ENCODE measurements at regions of chr4 and their contacts with region 1.

Region 1: DNA sequence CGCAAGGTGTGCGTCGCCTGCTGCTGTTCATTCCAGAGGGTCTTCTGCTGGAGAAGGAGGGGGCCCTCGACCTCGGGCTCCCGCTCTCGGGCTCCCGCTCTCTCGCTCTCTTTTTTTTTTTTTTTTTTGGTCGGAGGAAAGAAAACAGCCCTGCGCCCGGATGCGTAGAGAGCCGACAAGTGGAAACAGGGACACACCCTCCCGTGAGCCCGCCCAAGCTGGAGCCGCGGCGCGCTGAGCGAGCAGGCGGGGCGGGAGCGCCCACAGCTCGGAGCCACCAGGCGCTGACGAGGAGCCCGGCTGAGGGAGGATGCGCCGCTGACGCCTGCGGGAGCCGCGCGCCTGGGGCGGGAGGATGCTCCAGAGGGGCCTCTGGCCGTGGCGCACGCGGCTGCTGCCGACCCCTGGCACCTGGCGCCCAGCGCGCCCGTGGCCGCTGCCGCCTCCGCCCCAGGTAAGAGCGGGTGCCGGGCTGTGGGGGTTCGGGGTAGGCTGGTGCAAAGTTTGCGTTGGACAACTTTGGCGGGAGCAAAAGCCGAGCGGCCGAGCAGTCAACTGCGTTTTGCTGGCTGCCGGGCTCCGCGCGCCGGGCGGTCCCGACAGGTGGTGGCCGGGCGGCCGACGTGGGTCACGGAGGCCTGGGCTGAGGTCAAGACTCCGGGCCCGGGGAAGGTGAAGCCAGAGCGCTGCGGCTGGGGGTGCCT is at the start of gene MCUB:
- DNase-seq: peak; percentile 95
- H3K4me3 Mint-ChIP-seq: peak within 1 kb of the TSS; percentile 92
- H3K27ac Mint-ChIP-seq: peak within 1 kb of the TSS; percentile 94
- H3K4me1 Mint-ChIP-seq: peaks cover 49% of the 10 kb centered on the region
- H3K27me3 Mint-ChIP-seq: no peaks in the 10 kb centered on the region
- total RNA-seq, gene MCUB: 90.6 to 96.9 TPM

Region 2: GRCh38 chr4:109548655-109549054 is 11.5 kb before region 1 on chr4:
- CTCF ChIA-PET with region 1: interaction called, 4 read pairs
- POLR2A ChIA-PET with region 1: interaction called, 16 read pairs
- DNase-seq: no peak
- H3K4me3 Mint-ChIP-seq: no peak overlapping the region
- H3K27ac Mint-ChIP-seq: no peak overlapping the region
- H3K4me1 Mint-ChIP-seq: peaks cover 16% of the 10 kb centered on the region
- H3K27me3 Mint-ChIP-seq: no peaks in the 10 kb centered on the region

Region 3: DNA sequence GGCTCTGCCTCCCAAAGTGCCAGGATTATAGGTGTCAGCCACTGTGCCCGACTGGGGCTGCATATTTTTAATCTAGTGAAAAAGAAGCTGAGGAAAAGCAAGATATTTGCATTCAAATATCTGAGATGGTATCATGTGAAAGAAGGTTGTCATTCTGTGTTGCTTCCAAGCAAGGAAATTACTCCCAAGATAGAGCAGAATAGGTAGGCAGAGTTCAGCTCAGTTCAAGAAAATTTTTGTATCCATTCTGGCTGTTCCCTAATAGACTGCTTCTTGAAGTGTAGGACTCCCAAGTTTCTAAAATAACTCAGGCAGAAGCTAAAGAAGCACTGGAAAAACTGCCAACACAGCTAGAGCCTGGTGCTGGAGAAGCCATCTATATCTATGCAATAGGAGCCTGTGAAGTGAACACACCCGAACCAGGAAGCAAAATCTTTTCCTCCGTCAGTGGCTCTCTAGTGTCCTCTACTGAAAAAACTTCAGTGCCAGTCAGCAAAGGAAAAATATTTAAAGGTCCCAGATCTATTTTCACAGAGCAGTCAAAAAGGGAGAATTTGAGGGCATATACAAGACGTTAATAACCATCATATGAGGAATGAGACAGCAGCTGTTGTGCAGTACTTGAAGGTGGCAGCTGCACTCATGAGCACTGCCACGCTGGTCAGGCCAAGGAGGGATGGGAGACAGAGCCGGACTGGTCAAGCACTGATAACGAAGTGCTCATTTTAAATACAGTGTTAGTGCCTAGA is 14.1 kb after region 1 on chr4:
- CTCF ChIA-PET with region 1: interaction called, 10 read pairs
- POLR2A ChIA-PET with region 1: interaction called, 42 read pairs
- DNase-seq: no peak
- H3K4me3 Mint-ChIP-seq: no peak overlapping the region
- H3K27ac Mint-ChIP-seq: no peak overlapping the region
- H3K4me1 Mint-ChIP-seq: peaks cover 36% of the 10 kb centered on the region
- H3K27me3 Mint-ChIP-seq: no peaks in the 10 kb centered on the region

Region 4: GRCh38 chr4:109648266-109648996 is 88.3 kb after region 1 on chr4:
- CTCF ChIA-PET with region 1: interaction called, 6 read pairs
- POLR2A ChIA-PET with region 1: interaction called, 58 read pairs
- DNase-seq: no peak
- H3K4me3 Mint-ChIP-seq: peak overlapping the region; percentile 64
- H3K27ac Mint-ChIP-seq: peak overlapping the region; percentile 96
- H3K4me1 Mint-ChIP-seq: peaks cover 38% of the 10 kb centered on the region
- H3K27me3 Mint-ChIP-seq: no peaks in the 10 kb centered on the region

Region 5: DNA sequence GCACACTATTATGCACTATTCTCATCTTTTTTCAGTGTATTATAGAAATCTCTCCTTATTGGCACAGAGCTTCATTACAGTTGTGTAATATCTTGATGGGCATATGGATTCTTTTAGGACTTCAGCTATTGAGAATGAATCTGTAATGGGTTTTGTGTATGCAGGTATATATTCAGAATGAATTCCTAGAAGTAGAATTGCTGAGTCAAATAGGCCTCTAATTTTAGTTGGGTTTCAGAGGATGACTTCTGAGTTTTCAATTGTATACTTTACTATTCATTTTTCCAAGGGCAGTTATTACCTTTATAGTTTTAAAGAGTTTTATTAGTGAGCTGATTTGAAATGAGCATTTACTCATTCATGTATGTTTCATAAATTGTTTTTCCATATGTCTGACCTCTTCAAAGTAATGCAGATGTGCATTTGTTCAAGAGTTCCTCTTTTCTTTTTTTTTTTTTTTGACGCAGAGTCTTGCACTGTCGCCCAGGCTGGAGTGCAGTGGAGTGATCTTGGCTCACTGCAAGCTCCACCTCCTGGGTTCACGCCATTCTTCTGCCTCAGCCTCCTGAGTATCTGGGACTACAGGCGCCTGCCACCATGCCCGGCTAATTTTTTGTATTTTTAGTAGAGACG is 123.6 kb after region 1 on chr4:
- CTCF ChIA-PET with region 1: no interaction called
- POLR2A ChIA-PET with region 1: interaction called, 14 read pairs
- DNase-seq: no peak
- H3K4me3 Mint-ChIP-seq: no peak overlapping the region
- H3K27ac Mint-ChIP-seq: no peak overlapping the region
- H3K4me1 Mint-ChIP-seq: peaks cover 37% of the 10 kb centered on the region
- H3K27me3 Mint-ChIP-seq: no peaks in the 10 kb centered on the region

Region 6: GRCh38 chr4:109702950-109703663 is 143.0 kb after region 1 on chr4 and contains the start of gene CASP6:
- CTCF ChIA-PET with region 1: interaction called, 8 read pairs
- POLR2A ChIA-PET with region 1: interaction called, 39 read pairs
- DNase-seq: peak; percentile 83
- H3K4me3 Mint-ChIP-seq: peak within 1 kb of the TSS; percentile 93
- H3K27ac Mint-ChIP-seq: peak within 1 kb of the TSS; percentile 87
- H3K4me1 Mint-ChIP-seq: peaks cover 38% of the 10 kb centered on the region
- H3K27me3 Mint-ChIP-seq: no peaks in the 10 kb centered on the region
- total RNA-seq, gene CASP6: 30.5 to 32.4 TPM

Region 7: GRCh38 chr4:109815151-109816081 is 255.3 kb after region 1 on chr4 and contains the start of gene GAR1:
- CTCF ChIA-PET with region 1: no interaction called
- POLR2A ChIA-PET with region 1: interaction called, 29 read pairs
- DNase-seq: peak; percentile 93
- H3K4me3 Mint-ChIP-seq: peak within 1 kb of the TSS; percentile 98
- H3K27ac Mint-ChIP-seq: peak within 1 kb of the TSS; percentile 97
- H3K4me1 Mint-ChIP-seq: peaks cover 69% of the 10 kb centered on the region
- H3K27me3 Mint-ChIP-seq: no peaks in the 10 kb centered on the region
- total RNA-seq, gene GAR1: 26.1 to 27.5 TPM